Posterior cingulate gyrus (tissue), 11 donors: ENCODE measurements at regions of chr2 and their contacts with region 1.

Region 1: DNA sequence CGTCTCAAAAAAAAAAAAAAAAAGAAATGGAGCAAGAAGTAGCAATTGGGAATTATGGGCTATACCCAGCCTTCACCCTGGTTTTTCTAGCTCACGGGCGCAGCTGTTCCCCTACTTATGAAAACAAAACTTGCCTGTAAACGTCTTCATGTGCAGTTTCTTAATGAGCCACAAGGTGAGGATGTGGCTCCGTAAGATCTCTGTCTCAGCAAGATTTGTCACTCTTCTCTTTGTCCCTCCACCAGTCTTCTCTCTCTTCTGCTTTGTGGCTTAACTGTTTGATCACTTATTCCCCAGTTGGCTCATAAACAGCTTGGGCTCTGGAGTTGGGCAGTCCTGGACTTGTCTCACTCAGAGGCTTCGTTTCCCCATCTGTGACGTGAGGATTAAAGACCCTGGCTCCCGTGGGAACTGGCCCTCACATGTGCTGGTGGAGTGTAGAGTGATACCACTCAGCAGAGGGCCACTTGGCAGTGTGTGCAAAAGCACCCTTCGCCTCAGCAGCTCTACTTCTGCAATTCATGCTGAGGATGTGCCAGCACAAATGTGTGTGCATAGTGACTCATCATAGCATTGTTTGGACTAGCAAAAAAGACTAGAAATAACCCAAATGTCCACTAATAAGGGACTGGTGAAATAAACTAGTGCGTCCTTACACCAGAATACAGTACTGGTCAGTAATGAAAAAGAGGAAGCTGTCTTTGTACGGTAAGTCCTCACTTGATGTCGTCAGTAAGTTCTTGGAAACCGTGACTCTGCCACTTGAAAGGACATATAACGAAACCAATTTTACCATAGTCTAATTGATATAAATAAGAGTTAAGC is 8.7 kb downstream of the CEP68 start:
- DNase-seq: peak in 7 of 10 donors; percentile 41 to 93 (median 49)

Region 2: GRCh38 chr2:65186872-65187851 is 122.2 kb after region 1 on chr2:
- intact Hi-C with region 1: loop called (anchors 2 kb)
- DNase-seq: peak; percentile 62 to 96 (median 78)

Region 3: DNA sequence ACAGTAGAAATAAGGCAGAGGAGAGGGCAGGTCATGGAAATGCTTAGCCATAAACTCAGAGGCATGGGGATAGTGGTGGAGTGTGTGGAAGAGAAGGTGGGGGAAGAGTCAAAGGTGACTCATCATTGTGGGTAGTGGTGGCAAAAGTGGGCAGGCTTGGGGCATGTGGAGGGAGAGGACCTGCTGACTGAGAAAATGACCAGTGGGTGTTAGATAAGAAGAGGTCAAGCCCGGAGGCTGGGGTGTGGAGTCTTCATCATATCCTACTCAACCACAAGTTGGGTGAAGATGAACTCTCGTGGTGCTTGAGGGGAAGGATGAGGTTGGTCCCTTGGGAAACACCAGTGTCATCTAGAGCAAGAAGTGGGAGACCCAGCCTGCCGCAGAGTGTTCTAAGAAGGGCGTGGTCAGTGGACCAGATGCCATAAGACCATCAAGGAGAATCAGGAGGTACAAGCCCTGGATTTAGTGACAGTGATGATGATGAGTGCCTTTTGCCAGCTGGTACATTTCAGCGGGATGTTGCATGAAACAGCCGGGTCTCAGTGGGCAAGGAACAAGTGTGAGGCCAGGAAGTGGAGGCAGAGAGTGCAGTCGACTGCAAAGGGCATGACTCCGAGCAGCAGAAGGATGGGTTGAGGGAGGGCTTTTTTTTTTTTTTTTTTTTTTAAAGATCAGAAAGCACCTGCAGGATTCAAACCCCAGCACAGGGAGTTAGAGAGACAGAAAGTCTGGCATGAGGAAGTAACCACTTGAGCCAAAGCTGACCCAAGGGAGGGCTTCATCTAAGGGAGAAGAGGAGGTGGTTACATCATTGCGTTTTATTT is 490.0 kb after region 1 on chr2:
- intact Hi-C with region 1: no loop called
- DNase-seq: peak in 1 of 10 donors; percentile 42